Calu3 (cell line): ENCODE measurements at regions of chr7 and their contacts with region 1.

Region 1: DNA sequence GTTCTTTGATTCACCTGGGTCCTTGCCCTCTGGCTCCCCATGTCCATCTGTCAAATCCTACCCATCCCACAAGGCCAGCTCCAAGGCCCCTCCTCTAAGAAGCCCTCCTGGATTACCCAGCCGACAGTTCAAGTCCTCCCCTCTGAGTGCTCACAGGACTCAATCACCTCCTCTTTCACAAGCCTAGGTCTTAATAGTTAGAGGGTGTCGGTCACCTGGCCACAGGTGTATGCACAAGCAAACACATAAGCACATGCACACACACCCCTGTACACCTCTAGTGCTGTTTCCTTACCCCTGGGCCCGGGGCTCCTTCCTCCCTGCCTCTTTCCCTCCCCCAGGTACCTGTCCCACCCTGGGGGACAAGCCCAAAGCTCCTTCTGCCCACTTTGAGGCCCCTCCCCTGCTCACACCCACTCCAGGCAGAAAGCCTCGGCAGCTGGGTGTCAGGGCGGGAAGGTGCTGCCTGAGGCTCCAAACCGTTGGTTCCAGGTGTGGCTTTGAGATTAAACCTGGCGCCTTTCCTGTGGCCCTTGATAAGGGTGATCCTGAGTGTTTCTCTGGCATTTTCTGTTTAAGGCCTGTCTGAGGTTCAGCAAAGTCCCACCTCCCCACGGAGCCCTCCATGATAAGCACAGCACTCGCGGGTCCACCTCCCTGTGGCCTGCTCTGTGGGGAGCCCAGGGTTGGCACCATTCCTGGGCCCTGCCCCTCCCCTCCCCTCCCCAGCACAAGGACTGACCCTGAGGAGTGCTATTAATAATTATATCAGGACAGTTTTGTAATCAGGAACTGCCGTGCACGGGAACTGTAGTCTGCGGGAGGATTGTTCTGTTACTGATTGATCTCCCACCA is 14.6 kb upstream of the AQP1 start:
- DNase-seq: peak; percentile 78
- H3K4me3 Mint-ChIP-seq: peak overlapping the region; percentile 15
- H3K27ac Mint-ChIP-seq: peak overlapping the region; percentile 62
- H3K4me1 Mint-ChIP-seq: peaks cover 44% of the 10 kb centered on the region
- H3K27me3 Mint-ChIP-seq: no peaks in the 10 kb centered on the region
- CTCF ChIP-seq: no peak

Region 2: DNA sequence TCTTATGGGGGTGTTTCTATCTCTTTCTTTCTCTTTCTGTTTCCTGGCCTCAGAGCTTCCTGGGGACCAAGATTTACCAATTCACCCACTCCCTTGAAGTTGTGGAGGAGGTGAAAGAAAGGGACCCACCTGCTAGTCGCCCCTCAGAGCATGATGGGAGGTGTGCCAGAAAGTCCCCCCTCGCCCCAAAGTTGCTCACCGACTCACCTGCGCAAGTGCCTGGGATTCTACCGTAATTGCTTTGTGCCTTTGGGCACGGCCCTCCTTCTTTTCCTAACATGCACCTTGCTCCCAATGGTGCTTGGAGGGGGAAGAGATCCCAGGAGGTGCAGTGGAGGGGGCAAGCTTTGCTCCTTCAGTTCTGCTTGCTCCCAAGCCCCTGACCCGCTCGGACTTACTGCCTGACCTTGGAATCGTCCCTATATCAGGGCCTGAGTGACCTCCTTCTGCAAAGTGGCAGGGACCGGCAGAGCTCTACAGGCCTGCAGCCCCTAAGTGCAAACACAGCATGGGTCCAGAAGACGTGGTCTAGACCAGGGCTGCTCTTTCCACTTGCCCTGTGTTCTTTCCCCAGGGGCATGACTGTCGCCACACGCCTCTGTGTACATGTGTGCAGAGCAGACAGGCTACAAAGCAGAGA is 26.9 kb after region 1 on chr7:
- CTCF ChIA-PET with region 1: interaction called, 10 read pairs
- intact Hi-C with region 1: no loop called
- DNase-seq: peak; percentile 0
- H3K4me3 Mint-ChIP-seq: no peak overlapping the region
- H3K27ac Mint-ChIP-seq: no peak overlapping the region
- H3K4me1 Mint-ChIP-seq: peaks cover 21% of the 10 kb centered on the region
- H3K27me3 Mint-ChIP-seq: no peaks in the 10 kb centered on the region
- CTCF ChIP-seq: no peak

Region 3: DNA sequence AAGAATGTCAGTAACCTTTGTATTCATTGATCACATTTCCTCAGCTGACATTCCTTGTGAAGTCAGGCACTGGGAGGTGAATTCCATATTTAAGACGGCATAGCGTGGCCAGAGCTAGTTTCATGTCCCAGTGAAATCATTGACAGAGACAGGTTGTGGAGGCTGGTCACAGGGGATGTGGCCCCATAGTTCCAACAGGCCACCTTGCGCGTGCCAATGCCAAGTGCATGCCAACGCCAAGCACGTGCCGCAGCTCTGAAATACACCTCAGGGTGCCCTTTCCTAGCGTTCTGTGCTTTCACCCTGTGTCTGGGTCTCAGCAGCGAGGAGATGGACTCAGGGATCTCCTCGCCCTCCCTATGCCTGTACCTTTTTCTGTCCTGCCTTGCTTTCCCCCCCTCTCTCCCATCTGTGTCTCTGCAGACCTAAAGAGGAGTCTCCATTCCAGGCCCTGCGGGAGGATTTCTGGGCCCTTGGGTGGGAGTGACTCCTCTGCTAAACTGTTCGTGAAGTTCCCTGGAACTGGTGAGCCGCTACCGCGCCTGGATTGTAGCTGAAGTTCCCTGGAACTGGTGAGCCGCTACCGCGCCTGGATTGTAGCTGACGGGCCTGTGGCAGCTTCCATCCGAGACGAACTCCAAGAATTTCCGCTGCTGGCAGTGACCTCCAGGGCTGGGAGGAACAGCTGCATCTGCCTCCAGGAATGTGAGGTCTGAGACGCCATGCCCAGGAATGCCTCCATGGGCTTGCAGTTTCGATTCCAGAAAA is 34.3 kb after region 1 on chr7:
- CTCF ChIA-PET with region 1: interaction called, 10 read pairs
- intact Hi-C with region 1: no loop called
- DNase-seq: no peak
- H3K4me3 Mint-ChIP-seq: peak overlapping the region; percentile 5
- H3K27ac Mint-ChIP-seq: peak overlapping the region; percentile 63
- H3K4me1 Mint-ChIP-seq: peaks cover 63% of the 10 kb centered on the region
- H3K27me3 Mint-ChIP-seq: no peaks in the 10 kb centered on the region
- CTCF ChIP-seq: no peak

Region 4: DNA sequence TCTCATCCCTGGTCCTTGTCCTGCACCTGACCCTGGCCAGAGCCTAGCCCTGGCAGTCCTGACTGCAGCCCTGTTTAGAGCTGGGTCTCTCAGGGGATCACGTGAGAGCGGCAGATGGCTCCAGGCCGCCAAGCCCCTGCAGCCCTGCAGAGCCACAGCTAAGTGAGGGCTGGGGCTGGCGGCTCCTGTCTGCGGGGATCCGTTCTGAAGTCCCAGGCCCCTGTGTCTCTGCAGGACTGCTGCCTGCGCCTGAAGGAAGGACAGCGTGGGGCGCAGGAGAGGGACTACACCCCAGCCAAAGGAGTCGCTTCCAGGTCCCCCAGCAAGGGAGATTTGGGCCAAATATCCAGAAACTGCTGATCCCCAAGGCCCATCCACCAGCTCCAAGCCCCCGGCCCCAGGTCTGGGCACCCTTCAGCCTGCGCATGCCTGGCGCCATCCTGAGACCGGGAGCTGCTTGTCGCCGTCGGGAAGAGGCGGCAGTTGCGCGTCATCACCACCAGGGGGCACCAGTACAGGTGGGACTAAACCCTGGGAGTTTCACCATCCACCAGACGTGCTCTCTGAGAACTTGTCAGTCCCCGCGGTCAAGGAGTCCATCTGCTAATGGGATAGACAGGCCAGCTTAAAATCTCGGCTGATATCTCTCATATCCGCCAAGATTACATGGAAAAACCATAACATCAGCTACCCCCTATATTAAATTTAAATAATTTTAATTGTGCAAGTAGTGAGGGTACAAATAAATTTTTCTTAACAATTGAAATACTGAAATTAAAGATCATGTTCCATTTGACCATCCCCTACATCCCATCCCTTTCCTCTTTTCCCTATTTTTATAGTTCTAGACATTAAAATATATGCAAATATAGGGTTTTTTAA is 41.7 kb after region 1 on chr7:
- CTCF ChIA-PET with region 1: interaction called, 5 read pairs
- intact Hi-C with region 1: loop called (anchors 2 kb)
- DNase-seq: peak; percentile 99
- H3K4me3 Mint-ChIP-seq: no peak overlapping the region
- H3K27ac Mint-ChIP-seq: no peak overlapping the region
- H3K4me1 Mint-ChIP-seq: peaks cover 72% of the 10 kb centered on the region
- H3K27me3 Mint-ChIP-seq: no peaks in the 10 kb centered on the region
- CTCF ChIP-seq: peak; percentile 99

Region 5: GRCh38 chr7:30974605-30975255 is 77.7 kb after region 1 on chr7:
- CTCF ChIA-PET with region 1: no interaction called
- intact Hi-C with region 1: loop called (anchors 2 kb)
- DNase-seq: peak; percentile 98
- H3K4me3 Mint-ChIP-seq: no peak overlapping the region
- H3K27ac Mint-ChIP-seq: peak overlapping the region; percentile 94
- H3K4me1 Mint-ChIP-seq: peaks cover 65% of the 10 kb centered on the region
- H3K27me3 Mint-ChIP-seq: peaks cover 34% of the 10 kb centered on the region
- CTCF ChIP-seq: peak; percentile 97